Activated CD4-positive, alpha-beta T cell treated with anti-CD3 and anti-CD28 coated beads, Interleukin-2, amount 10 ng/mL, durations not matched to agents 24 days and 14 days (primary cell): ENCODE measurements at regions of chr6 and their contacts with region 1.

Region 1: DNA sequence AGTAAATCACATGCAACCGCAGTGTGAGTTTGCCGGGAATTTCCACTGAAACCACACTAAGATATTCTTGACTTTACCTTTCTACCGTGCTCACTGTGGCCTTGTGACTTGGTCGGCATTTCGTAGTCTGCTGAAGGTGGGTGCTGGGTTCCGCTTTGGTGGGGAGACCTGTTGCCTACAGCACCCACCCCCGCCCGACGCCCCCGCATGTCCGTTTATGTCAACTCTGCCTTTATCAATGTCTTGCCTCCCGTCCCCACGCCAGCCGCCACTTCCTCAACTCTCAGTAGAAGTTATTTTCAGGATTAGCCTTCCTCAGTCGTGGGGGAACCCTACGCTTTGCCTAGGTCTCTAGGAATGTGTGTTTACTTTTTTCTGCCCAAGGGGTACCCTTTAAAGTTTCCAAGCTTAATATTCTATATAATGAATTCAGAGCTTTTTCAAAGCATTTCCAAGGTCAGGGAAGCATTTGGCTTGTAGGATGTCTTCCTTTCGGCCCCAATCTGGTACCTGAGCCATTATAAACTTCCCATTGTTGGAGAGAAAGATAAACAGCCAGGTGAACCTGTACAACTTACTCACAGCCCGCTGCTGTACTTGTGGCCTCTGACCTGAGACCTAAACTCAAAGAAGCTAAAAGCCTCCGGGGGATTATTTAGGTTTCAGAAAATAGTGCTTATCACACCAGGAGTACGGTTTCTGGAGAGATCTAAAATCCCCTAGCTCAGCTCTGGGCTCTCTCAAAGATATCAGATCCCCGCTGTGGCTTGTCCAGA is 54.2 kb downstream of the TBC1D7 start:
- DNase-seq: peak; percentile 84
- H3K4me3 Mint-ChIP-seq: peak overlapping the region; percentile 63
- H3K27ac Mint-ChIP-seq: peak overlapping the region; percentile 75
- H3K4me1 Mint-ChIP-seq: peaks cover 22% of the 10 kb centered on the region
- H3K27me3 Mint-ChIP-seq: peaks cover 11% of the 10 kb centered on the region

Region 2: DNA sequence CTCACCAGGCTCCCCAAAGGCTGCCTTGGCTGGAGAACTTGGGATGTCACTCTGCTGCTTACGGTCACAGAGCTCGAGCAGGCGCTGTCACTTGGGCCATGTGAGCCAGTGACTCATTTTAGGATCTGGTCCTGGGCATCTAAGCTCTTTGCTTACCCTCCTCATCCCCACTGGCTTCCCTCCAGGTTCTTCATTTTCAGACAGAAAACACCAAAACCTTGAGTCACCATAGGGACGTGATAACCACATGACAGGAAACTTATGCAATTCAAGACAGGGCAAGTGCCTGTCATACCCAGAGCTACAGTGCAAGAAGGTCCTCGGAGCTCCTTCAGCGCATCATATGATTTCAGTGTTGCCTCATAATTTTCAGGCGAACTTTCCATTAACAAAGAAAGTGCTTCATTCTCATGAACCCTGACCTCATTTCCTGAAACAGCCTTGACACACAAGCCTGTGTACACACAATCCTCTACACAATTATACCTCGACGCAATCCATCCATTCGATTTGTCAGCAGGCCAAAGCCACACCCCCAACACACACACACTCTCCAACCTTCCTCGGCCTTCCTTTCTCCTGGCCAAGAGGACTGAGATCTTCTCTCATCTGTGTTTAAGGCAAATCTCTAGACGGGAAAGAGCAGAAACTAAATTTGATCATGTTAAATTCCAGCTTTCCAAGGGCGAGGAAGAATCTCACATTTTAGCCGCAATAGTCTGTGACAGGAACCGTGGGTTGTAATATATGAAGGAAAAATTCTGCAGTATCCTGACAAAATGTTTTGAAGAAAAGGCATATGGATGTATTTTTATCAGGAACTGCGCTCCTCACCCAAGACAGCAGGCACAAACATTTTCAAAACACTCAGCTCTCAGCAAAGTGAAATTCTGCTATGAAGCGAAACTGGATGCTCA is 28.9 kb after region 1 on chr6:
- intact Hi-C with region 1: loop called (anchors 1 kb)
- DNase-seq: peak; percentile 85
- H3K4me3 Mint-ChIP-seq: peak overlapping the region; percentile 49
- H3K27ac Mint-ChIP-seq: peak overlapping the region; percentile 79
- H3K4me1 Mint-ChIP-seq: peaks cover 24% of the 10 kb centered on the region
- H3K27me3 Mint-ChIP-seq: no peaks in the 10 kb centered on the region